ENCODE measurements at regions of chr1 and their contacts with region 1.

Region 1: GRCh38 chr1:206705191-206705590 is 20.5 kb downstream of the MAPKAPK2 start:
- DNase-seq: peak; percentile 89
- ATAC-seq: peak; percentile 72
- H3K4me3 ChIP-seq: no peak overlapping the region
- H3K27ac ChIP-seq: no peak overlapping the region
- H3K4me1 ChIP-seq: peaks cover 36% of the 10 kb centered on the region
- H3K27me3 ChIP-seq: no peaks in the 10 kb centered on the region
- CTCF ChIP-seq: no peak
- POLR2A ChIP-seq: no peak
- RAD21 ChIP-seq: no peak

Region 2: GRCh38 chr1:205729945-205730610 is 975.1 kb before region 1 on chr1:
- CTCF ChIA-PET with region 1: no interaction called
- POLR2A ChIA-PET with region 1: no interaction called
- dilution Hi-C with region 1: no loop called
- in situ Hi-C with region 1: no loop called
- intact Hi-C with region 1: no loop called
- DNase-seq: peak; percentile 26
- ATAC-seq: peak; percentile 79
- H3K4me3 ChIP-seq: no peak overlapping the region
- H3K27ac ChIP-seq: no peak overlapping the region
- H3K4me1 ChIP-seq: peaks cover 2% of the 10 kb centered on the region
- H3K27me3 ChIP-seq: no peaks in the 10 kb centered on the region
- CTCF ChIP-seq: no peak
- POLR2A ChIP-seq: no peak
- RAD21 ChIP-seq: no peak

Region 3: GRCh38 chr1:206646504-206646903 is 58.7 kb before region 1 on chr1:
- CTCF ChIA-PET with region 1: no interaction called
- POLR2A ChIA-PET with region 1: no interaction called
- dilution Hi-C with region 1: no loop called
- in situ Hi-C with region 1: no loop called
- intact Hi-C with region 1: no loop called
- DNase-seq: no peak
- ATAC-seq: no peak
- H3K4me3 ChIP-seq: no peak overlapping the region
- H3K27ac ChIP-seq: no peak overlapping the region
- H3K4me1 ChIP-seq: peaks cover 2% of the 10 kb centered on the region; the same call in 1 of the 2 replicates
- H3K27me3 ChIP-seq: no peaks in the 10 kb centered on the region
- CTCF ChIP-seq: no peak
- POLR2A ChIP-seq: no peak
- RAD21 ChIP-seq: no peak

Region 4: DNA sequence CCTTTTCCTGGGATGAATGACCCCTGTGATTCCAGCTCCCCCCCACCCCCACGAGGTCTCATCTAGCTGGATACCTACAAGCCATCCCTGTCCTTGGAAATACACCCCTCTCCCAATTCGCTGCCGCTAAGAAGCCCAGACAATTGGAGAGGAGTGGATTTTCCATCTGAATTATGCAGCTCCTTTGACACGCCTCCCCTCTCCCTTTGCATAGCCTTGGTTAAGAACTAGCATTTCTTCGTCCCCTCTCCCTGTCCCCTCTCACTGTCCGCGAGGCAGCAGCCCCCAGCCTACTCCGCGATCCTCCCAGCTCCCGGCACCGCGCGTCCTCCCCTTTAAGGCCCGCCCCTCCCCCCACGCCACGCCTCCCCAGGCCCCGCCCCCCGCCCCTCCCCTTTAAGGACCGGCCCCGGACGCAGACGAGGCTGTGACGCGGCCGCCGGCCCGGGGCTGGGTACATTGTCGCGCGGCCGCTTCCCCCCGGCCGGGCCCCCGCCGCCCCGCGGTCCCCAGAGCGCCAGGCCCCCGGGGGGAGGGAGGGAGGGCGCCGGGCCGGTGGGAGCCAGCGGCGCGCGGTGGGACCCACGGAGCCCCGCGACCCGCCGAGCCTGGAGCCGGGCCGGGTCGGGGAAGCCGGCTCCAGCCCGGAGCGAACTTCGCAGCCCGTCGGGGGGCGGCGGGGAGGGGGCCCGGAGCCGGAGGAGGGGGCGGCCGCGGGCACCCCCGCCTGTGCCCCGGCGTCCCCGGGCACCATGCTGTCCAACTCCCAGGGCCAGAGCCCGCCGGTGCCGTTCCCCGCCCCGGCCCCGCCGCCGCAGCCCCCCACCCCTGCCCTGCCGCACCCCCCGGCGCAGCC is 20.5 kb before region 1 on chr1 and contains the start of gene MAPKAPK2:
- CTCF ChIA-PET with region 1: no interaction called
- POLR2A ChIA-PET with region 1: no interaction called
- dilution Hi-C with region 1: no loop called
- in situ Hi-C with region 1: no loop called
- intact Hi-C with region 1: loop called (anchors 2 kb)
- DNase-seq: peak; percentile 61
- ATAC-seq: peak; percentile 77
- H3K4me3 ChIP-seq: peak within 1 kb of the TSS; percentile 96
- H3K27ac ChIP-seq: peak within 1 kb of the TSS; percentile 100
- H3K4me1 ChIP-seq: peaks cover 17% of the 10 kb centered on the region
- H3K27me3 ChIP-seq: no peaks in the 10 kb centered on the region; the same call in 1 of the 2 replicates
- CTCF ChIP-seq: no peak
- POLR2A ChIP-seq: peak; percentile 85
- RAD21 ChIP-seq: no peak
- total RNA-seq, gene MAPKAPK2: 50.8 and 56.5 TPM in 2 replicates